ENCODE measurements at regions of chr7 and their contacts with region 1.

Region 1: GRCh38 chr7:64902806-64903721 is at the start of gene ZNF273:
- DNase-seq: peak; percentile 97
- H3K4me3 Mint-ChIP-seq: peak within 1 kb of the TSS; percentile 96
- H3K27ac Mint-ChIP-seq: peak within 1 kb of the TSS; percentile 89
- H3K4me1 Mint-ChIP-seq: peaks cover 35% of the 10 kb centered on the region
- H3K27me3 Mint-ChIP-seq: no peaks in the 10 kb centered on the region
- total RNA-seq, gene ZNF273: 10.9 to 12.3 TPM

Region 2: DNA sequence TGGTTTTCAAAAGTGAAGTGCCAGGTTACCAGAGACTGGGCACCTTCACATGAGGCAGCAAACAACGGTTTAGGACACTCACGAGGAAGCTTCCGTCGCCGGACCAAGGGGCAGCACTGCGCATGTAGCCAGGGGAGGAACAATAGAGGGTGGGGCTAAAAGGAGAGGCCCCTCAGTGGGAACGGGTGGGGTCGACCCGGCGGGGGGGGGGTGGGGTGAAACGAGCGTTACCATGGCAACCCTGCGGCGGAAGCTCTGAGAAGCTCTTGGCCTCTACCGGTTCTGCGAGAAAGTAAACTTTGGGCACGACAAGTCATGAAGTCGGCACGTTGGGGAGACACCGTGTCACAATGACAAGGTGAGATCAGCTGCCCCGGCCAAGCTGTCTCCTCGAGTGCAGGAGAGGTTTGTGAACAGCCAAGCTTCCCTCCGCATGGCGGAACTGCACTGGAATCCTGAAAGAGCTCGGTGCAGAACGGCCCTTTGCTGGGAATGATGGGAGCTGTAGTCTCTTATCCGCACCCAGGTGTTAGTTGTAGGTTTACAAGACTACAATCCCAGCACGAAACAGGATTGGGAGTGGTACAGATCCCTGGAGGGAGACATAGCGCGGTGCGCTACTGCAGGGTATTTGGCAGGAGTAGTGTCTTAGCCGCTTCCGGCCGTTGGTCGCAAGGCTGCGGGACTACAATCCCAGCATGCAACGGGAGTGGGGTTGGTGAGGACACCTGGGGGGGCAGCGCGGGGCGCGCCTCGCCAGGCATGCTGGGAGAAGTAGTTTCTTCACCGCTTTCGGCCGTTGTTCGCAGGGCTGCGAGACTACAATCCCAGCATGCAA is 977.2 kb before region 1 on chr7:
- CTCF ChIA-PET with region 1: no interaction called
- intact Hi-C with region 1: loop called (anchors 5 kb)
- DNase-seq: peak; percentile 93
- H3K4me3 Mint-ChIP-seq: peak overlapping the region; percentile 93
- H3K27ac Mint-ChIP-seq: peak overlapping the region; percentile 96
- H3K4me1 Mint-ChIP-seq: peaks cover 9% of the 10 kb centered on the region
- H3K27me3 Mint-ChIP-seq: no peaks in the 10 kb centered on the region

Region 3: GRCh38 chr7:64485623-64486022 is 417.4 kb before region 1 on chr7:
- CTCF ChIA-PET with region 1: no interaction called
- intact Hi-C with region 1: no loop called
- DNase-seq: no peak
- H3K4me3 Mint-ChIP-seq: no peak overlapping the region
- H3K27ac Mint-ChIP-seq: no peak overlapping the region
- H3K4me1 Mint-ChIP-seq: no peaks in the 10 kb centered on the region
- H3K27me3 Mint-ChIP-seq: no peaks in the 10 kb centered on the region

Region 4: DNA sequence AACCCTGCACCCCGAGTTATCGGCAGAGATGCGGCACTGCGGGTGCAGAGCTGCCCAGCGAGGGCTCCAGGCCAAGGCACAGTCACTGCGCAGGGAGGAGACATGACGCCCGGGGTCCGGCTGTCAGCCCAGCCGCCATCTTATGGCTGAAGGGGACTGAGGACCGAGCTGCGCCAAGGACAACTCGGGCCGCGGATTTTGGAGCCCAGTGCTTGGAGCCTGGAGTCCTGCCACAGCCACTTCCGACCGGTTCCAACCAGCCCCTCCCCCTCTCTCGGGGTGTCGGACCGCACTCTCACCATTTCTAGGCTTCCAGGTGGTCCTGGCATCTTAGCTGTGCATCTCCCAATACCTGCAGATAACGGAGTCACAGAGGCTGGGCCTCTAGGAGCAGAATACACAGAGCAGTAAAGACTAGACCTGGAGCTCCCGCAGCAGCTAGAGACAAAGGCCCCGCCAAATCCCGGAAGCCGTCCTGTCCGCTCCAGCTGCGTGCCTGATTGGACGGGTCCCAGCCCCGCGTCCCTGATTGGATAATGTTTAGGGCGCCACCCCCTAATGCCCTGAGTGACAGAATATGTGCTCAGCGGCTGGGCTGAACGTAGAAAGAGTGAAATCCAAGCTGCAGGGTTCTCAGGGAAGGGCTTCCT is 340.3 kb before region 1 on chr7 and contains the start of gene ZNF680:
- CTCF ChIA-PET with region 1: no interaction called
- intact Hi-C with region 1: loop called (anchors 5 kb)
- DNase-seq: peak; percentile 96
- H3K4me3 Mint-ChIP-seq: peak within 1 kb of the TSS; percentile 100
- H3K27ac Mint-ChIP-seq: peak within 1 kb of the TSS; percentile 97
- H3K4me1 Mint-ChIP-seq: peaks cover 24% of the 10 kb centered on the region
- H3K27me3 Mint-ChIP-seq: no peaks in the 10 kb centered on the region
- total RNA-seq, gene ZNF680: 13.4 to 14.0 TPM

Region 5: GRCh38 chr7:64794171-64794844 is 108.8 kb before region 1 on chr7 and contains the start of gene ZNF138:
- CTCF ChIA-PET with region 1: no interaction called
- intact Hi-C with region 1: loop called (anchors 2 kb)
- DNase-seq: peak; percentile 98
- H3K4me3 Mint-ChIP-seq: peak within 1 kb of the TSS; percentile 97
- H3K27ac Mint-ChIP-seq: peak within 1 kb of the TSS; percentile 95
- H3K4me1 Mint-ChIP-seq: peaks cover 26% of the 10 kb centered on the region
- H3K27me3 Mint-ChIP-seq: no peaks in the 10 kb centered on the region
- total RNA-seq, gene ZNF138: 10.6 to 10.7 TPM

Region 6: DNA sequence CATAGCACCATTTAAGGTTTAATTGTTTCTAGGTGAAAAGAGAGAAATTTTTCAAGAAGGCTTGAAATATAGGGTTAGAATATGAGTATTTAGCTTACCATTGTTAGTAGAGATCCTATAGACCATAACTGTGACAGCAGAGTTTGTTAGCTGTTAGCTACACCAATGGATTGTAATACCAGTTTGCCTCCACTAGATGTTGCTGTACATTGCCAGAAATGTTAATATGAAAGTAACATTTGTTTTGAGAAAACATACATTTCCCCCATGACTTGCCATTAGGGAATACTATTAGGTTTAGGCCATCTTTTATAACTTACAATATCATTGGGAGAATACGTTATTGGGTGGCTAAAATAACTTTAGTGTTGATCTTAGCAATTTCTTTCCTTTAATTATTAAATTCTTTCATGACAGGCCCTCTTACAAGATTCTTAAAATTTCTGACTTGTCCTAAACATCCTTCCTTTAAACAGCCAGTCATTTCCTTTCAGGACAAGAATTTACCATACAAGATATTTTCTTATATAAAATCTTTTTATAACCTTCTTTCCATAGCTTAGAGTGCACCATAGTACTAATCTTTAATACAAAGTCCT is 48.3 kb after region 1 on chr7:
- CTCF ChIA-PET with region 1: interaction called, 3 read pairs
- intact Hi-C with region 1: loop called (anchors 5 kb)
- DNase-seq: no peak
- H3K4me3 Mint-ChIP-seq: no peak overlapping the region
- H3K27ac Mint-ChIP-seq: no peak overlapping the region
- H3K4me1 Mint-ChIP-seq: peaks cover 3% of the 10 kb centered on the region
- H3K27me3 Mint-ChIP-seq: peaks cover 37% of the 10 kb centered on the region

Region 7: GRCh38 chr7:65373608-65374351 is 470.7 kb after region 1 on chr7 and contains the start of gene ZNF92:
- CTCF ChIA-PET with region 1: no interaction called
- intact Hi-C with region 1: loop called (anchors 5 kb)
- DNase-seq: peak; percentile 99
- H3K4me3 Mint-ChIP-seq: peak within 1 kb of the TSS; percentile 94
- H3K27ac Mint-ChIP-seq: peak within 1 kb of the TSS; percentile 90
- H3K4me1 Mint-ChIP-seq: peaks cover 32% of the 10 kb centered on the region
- H3K27me3 Mint-ChIP-seq: no peaks in the 10 kb centered on the region
- total RNA-seq, gene ZNF92: 13.6 to 15.5 TPM

Measured in activated naive CD4-positive, alpha-beta T cell treated with anti-CD3 and anti-CD28 coated beads for 36 hours (primary cell).